Naive thymus-derived CD4-positive, alpha-beta T cell (primary cell): ENCODE measurements at regions of chr11 and their contacts with region 1.

Region 1: GRCh38 chr11:17230867-17231851 is 23.4 kb upstream of the PIK3C2A start:
- DNase-seq: peak in 8 of 9 donors; percentile 20 to 62 (median 36)
- ATAC-seq: peak; percentile 79
- H3K4me3 ChIP-seq: no peak overlapping the region
- H3K4me3 Mint-ChIP-seq: peak overlapping the region in 6 of 10 donors; percentile 2 to 55 (median 26)
- H3K27ac ChIP-seq: no peak overlapping the region
- H3K27ac Mint-ChIP-seq: peak overlapping the region in 4 of 9 donors; percentile 14 to 90 (median 60)
- H3K4me1 ChIP-seq: peaks cover 3 to 7% of the 10 kb centered on the region in 2 donors
- H3K4me1 Mint-ChIP-seq: peaks cover 7 to 19% (median 14%) of the 10 kb centered on the region in 7 donors
- H3K27me3 ChIP-seq: no peaks in the 10 kb centered on the region
- H3K27me3 Mint-ChIP-seq: peaks cover 0 to 27% (median 0%) of the 10 kb centered on the region in 5 donors

Region 2: DNA sequence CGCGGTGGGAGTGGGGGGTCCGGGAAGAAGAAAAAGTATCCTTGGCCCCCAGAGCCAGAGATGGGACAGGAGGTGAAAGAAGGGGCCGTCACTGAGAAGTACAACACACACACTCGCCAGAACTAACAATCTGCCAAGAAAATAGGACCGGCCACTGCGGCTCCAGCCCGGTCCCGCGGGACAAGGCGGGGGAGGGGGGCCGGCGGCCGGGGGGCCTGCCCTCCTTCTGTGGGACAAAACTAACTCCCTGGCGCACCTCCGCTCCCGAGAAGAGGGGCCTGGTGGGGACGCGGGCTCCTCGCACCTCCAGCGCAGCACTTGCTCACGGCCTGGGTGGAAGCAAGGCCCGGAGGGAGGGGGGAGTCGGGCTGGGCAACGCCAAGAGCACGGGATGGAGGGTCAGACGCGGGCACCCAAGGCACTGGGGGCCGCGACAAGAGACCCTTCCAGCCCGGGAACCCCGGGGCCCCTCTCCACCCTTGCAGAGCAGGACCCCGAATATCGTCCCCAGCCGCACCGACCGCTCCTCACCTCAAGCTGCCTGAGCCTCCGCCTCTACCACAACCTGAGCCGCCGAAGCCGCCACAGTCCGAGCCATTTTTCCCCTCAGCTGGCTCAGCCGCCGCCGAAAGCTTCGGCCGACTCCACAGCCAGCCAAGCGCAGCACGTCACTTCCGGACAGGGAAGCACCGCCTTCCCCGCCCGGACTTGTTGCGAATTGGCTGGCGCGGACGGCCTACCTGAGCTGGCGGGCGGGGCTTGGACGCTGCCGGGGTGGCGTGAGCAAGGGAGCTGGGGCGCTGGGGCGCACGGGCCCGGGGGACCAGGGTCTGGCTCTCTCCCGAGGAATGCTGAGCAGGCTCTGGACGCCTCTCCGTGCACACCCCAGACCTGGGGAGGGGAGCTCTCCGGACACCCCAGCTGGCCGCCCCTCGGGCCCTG is 23.6 kb before region 1 on chr11 and contains the start of gene PIK3C2A:
- CTCF ChIA-PET with region 1: interaction called, 4 read pairs
- POLR2A ChIA-PET with region 1: no interaction called
- intact Hi-C with region 1: loop called (anchors 1 kb)
- DNase-seq: peak; percentile 84 to 94 (median 91)
- ATAC-seq: peak; percentile 98
- H3K4me3 ChIP-seq: peak within 1 kb of the TSS; percentile 93
- H3K4me3 Mint-ChIP-seq: peak within 1 kb of the TSS; percentile 90 to 99 (median 98)
- H3K27ac ChIP-seq: peak within 1 kb of the TSS; percentile 93
- H3K27ac Mint-ChIP-seq: peak within 1 kb of the TSS; percentile 87 to 99 (median 97)
- H3K4me1 ChIP-seq: peaks cover 15 to 19% of the 10 kb centered on the region in 2 donors
- H3K4me1 Mint-ChIP-seq: peaks cover 34 to 57% (median 48%) of the 10 kb centered on the region in 7 donors
- H3K27me3 ChIP-seq: no peaks in the 10 kb centered on the region
- H3K27me3 Mint-ChIP-seq: no peaks in the 10 kb centered on the region
- total RNA-seq, gene PIK3C2A: 25.4 to 56.4 (median 42.0) TPM

Region 3: GRCh38 chr11:17294033-17294432 is 62.9 kb after region 1 on chr11:
- CTCF ChIA-PET with region 1: interaction called, 4 read pairs
- POLR2A ChIA-PET with region 1: no interaction called
- intact Hi-C with region 1: loop called in 1 of 2 experiments (anchors 2 kb)
- DNase-seq: no peak
- ATAC-seq: no peak
- H3K4me3 ChIP-seq: no peak overlapping the region
- H3K4me3 Mint-ChIP-seq: no peak overlapping the region
- H3K27ac ChIP-seq: peak overlapping the region; percentile 9
- H3K27ac Mint-ChIP-seq: peak overlapping the region in 8 of 9 donors; percentile 40 to 81 (median 58)
- H3K4me1 ChIP-seq: peaks cover 3 to 11% of the 10 kb centered on the region in 2 donors
- H3K4me1 Mint-ChIP-seq: peaks cover 15 to 69% (median 57%) of the 10 kb centered on the region in 7 donors
- H3K27me3 ChIP-seq: no peaks in the 10 kb centered on the region
- H3K27me3 Mint-ChIP-seq: no peaks in the 10 kb centered on the region

Region 4: DNA sequence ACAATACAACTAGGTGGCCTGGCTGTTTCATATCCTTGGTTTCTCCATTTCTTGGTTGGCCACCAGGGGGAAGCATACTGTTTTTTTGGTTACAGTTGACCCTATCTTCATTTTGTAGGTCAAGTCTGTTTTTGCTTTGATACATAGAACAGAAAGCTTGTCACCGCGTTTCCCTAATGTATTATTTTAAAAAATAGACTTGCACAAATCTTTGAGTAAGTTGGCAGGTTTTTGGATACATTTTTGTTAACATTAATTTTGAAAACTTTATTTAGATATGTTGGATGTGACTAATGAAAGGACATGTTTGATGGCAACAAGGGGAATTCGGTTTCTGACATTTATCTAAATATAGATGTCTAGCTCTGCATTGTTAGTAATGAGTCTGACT is 123.4 kb after region 1 on chr11:
- CTCF ChIA-PET with region 1: interaction called, 5 read pairs
- POLR2A ChIA-PET with region 1: no interaction called
- intact Hi-C with region 1: loop called (anchors 1 kb)
- DNase-seq: peak in 8 of 9 donors; percentile 27 to 55 (median 50)
- ATAC-seq: peak; percentile 43
- H3K4me3 ChIP-seq: no peak overlapping the region
- H3K4me3 Mint-ChIP-seq: peak overlapping the region in 9 of 10 donors; percentile 83 to 95 (median 90)
- H3K27ac ChIP-seq: no peak overlapping the region
- H3K27ac Mint-ChIP-seq: peak overlapping the region in 6 of 9 donors; percentile 29 to 84 (median 60)
- H3K4me1 ChIP-seq: peaks cover 10% of the 10 kb centered on the region in 2 donors
- H3K4me1 Mint-ChIP-seq: peaks cover 28 to 31% (median 29%) of the 10 kb centered on the region in 7 donors
- H3K27me3 ChIP-seq: no peaks in the 10 kb centered on the region
- H3K27me3 Mint-ChIP-seq: peaks cover 0 to 49% (median 0%) of the 10 kb centered on the region in 5 donors

Region 5: GRCh38 chr11:17504330-17505107 is 273.4 kb after region 1 on chr11:
- CTCF ChIA-PET with region 1: interaction called, 15 read pairs
- POLR2A ChIA-PET with region 1: no interaction called
- intact Hi-C with region 1: loop called (anchors 1 kb)
- DNase-seq: peak; percentile 63 to 83 (median 77)
- ATAC-seq: peak; percentile 79
- H3K4me3 ChIP-seq: no peak overlapping the region
- H3K4me3 Mint-ChIP-seq: no peak overlapping the region
- H3K27ac ChIP-seq: no peak overlapping the region
- H3K27ac Mint-ChIP-seq: no peak overlapping the region
- H3K4me1 ChIP-seq: no peaks in the 10 kb centered on the region
- H3K4me1 Mint-ChIP-seq: no peaks in the 10 kb centered on the region
- H3K27me3 ChIP-seq: no peaks in the 10 kb centered on the region
- H3K27me3 Mint-ChIP-seq: peaks cover 0 to 12% (median 5%) of the 10 kb centered on the region in 5 donors